AG04449 (cell line): ENCODE measurements at regions of chr17 and their contacts with region 1.

Region 1: GRCh38 chr17:58006924-58007780 is at the start of gene SRSF1:
- DNase-seq: peak; percentile 75
- H3K4me3 ChIP-seq: peak within 1 kb of the TSS; percentile 95
- CTCF ChIP-seq: no peak

Region 2: GRCh38 chr17:57868007-57868909 is 138.9 kb before region 1 on chr17:
- CTCF ChIA-PET with region 1: interaction called, 1,361 read pairs
- POLR2A ChIA-PET with region 1: interaction called, 13 read pairs
- DNase-seq: peak; percentile 44
- H3K4me3 ChIP-seq: no peak overlapping the region; the same call in 1 of the 2 replicates
- CTCF ChIP-seq: peak; percentile 64

Region 3: DNA sequence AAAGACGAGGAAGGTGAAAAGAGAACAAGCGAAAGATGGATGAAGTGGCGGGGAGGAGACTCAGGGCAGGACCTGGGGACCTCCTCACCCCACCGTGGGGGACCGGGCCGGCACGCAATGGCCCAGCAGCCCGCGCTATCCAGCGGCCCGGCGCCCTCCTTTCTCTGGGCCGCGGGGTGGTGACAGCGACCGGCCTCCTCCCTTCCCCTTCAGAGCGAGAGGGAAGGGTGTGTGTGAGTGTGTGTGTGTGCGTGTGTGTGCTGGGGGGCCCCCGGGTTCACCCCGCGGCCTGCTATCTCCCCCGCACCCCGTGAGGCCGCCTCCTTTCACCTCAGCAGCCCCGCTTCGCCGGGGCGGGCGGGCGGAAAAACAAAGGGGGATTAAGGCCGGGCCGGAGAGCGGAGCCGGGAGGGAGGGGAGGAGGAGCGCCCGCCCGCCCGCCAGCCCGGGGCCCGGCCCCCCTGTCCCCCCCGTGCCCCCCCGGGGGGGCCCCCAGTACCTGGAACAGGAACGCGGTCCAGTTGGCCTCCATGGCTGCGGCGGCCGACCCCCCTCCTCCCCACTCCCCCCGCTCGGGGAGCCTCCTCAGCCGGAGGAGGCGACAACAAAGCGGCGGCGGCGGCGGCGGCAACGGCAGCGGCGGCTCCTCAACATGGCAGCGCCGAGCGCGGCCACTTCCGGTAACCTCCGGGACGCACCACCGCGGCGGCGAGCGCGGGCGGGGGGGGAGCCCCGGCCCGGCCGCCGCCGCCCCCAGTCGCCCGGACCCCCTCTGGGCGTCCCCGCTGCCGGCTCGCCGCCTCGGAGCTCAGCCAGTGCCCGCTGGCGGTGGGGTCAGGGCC is 19.4 kb before region 1 on chr17 and contains the start of gene VEZF1:
- CTCF ChIA-PET with region 1: interaction called, 88 read pairs
- POLR2A ChIA-PET with region 1: interaction called, 11 read pairs
- DNase-seq: no peak
- H3K4me3 ChIP-seq: peak within 1 kb of the TSS; percentile 80
- CTCF ChIP-seq: no peak

Region 4: GRCh38 chr17:58082870-58083490 is 75.8 kb after region 1 on chr17 and contains the start of gene DYNLL2:
- CTCF ChIA-PET with region 1: no interaction called
- POLR2A ChIA-PET with region 1: interaction called, 23 read pairs
- DNase-seq: peak; percentile 33
- H3K4me3 ChIP-seq: peak within 1 kb of the TSS; percentile 88
- CTCF ChIP-seq: no peak